Activated CD8-positive, alpha-beta T cell treated with anti-CD3 and anti-CD28 coated beads for 36 hours (primary cell): ENCODE measurements at regions of chr2 and their contacts with region 1.

Region 1: DNA sequence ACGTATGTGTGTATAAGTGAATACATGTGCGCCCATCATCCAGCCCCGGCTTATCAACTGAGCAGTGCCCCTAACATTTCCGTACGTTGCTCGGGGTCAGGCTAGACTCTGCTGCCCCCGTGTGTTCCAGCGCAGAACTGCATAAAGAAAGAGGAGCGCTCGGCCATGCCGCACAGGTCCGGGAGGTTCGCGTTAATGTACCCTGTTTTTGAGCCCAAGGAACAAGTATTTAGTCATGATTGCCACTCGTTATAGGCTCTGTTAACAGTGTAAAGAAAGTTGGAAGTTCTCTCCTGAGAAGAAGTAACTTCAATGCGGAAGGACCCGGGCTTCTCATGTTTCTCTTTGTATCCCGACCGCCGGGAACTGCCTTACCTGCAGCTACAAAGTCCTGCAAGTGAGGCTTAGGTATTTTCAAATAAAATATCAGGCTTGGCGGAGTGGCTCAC is 55.7 kb downstream of the CD8B2 start:
- DNase-seq: peak; percentile 88
- ATAC-seq: peak; percentile 100
- H3K4me3 Mint-ChIP-seq: peak overlapping the region; percentile 44
- H3K27ac Mint-ChIP-seq: no peak overlapping the region
- H3K4me1 Mint-ChIP-seq: no peaks in the 10 kb centered on the region
- H3K27me3 Mint-ChIP-seq: peaks cover 18% of the 10 kb centered on the region
- CTCF ChIP-seq: peak; percentile 96

Region 2: DNA sequence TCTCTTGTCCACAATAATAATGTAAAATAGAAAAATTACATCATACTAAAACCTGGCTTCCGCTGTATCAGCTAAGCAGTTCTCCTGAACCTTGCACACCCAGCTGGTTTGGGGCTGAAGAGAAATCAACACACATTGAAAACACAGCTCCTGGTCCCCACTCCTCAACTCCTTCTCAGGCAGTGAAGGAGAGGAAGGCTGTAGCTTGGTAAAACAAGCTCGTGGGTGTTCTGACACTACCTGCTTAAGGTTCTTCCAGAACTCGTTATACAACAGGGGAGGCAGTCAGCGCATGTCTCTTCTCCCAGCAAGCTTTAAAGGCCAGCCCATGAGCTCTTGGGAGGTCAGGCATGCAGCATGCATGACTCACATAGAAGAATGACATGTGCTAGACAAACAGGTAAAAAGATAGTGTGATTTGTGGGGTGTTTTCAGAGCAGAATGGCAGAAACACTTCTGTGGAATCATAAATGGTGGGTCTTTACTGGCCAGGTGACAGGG is 417.9 kb before region 1 on chr2:
- CTCF ChIA-PET with region 1: no interaction called
- POLR2A ChIA-PET with region 1: no interaction called
- intact Hi-C with region 1: no loop called
- DNase-seq: no peak
- ATAC-seq: no peak
- H3K4me3 Mint-ChIP-seq: no peak overlapping the region
- H3K27ac Mint-ChIP-seq: peak overlapping the region; percentile 49
- H3K4me1 Mint-ChIP-seq: peaks cover 26% of the 10 kb centered on the region
- H3K27me3 Mint-ChIP-seq: no peaks in the 10 kb centered on the region
- CTCF ChIP-seq: no peak

Region 3: GRCh38 chr2:106531745-106532144 is 11.1 kb before region 1 on chr2:
- CTCF ChIA-PET with region 1: interaction called, 14 read pairs
- POLR2A ChIA-PET with region 1: interaction called, 4 read pairs
- intact Hi-C with region 1: no loop called
- DNase-seq: no peak
- ATAC-seq: no peak
- H3K4me3 Mint-ChIP-seq: no peak overlapping the region
- H3K27ac Mint-ChIP-seq: no peak overlapping the region
- H3K4me1 Mint-ChIP-seq: peaks cover 6% of the 10 kb centered on the region
- H3K27me3 Mint-ChIP-seq: peaks cover 7% of the 10 kb centered on the region
- CTCF ChIP-seq: no peak

Region 4: GRCh38 chr2:106572541-106573450 is 30.0 kb after region 1 on chr2:
- CTCF ChIA-PET with region 1: interaction called, 21 read pairs
- POLR2A ChIA-PET with region 1: no interaction called
- intact Hi-C with region 1: no loop called
- DNase-seq: peak; percentile 53
- ATAC-seq: peak; percentile 60
- H3K4me3 Mint-ChIP-seq: no peak overlapping the region
- H3K27ac Mint-ChIP-seq: no peak overlapping the region
- H3K4me1 Mint-ChIP-seq: no peaks in the 10 kb centered on the region
- H3K27me3 Mint-ChIP-seq: peaks cover 5% of the 10 kb centered on the region
- CTCF ChIP-seq: peak; percentile 71

Region 5: GRCh38 chr2:106582148-106583143 is 39.6 kb after region 1 on chr2:
- CTCF ChIA-PET with region 1: interaction called, 13 read pairs
- POLR2A ChIA-PET with region 1: no interaction called
- intact Hi-C with region 1: no loop called
- DNase-seq: peak; percentile 71
- ATAC-seq: peak; percentile 94
- H3K4me3 Mint-ChIP-seq: peak overlapping the region; percentile 79
- H3K27ac Mint-ChIP-seq: no peak overlapping the region
- H3K4me1 Mint-ChIP-seq: peaks cover 9% of the 10 kb centered on the region
- H3K27me3 Mint-ChIP-seq: peaks cover 48% of the 10 kb centered on the region
- CTCF ChIP-seq: peak; percentile 92

Region 6: GRCh38 chr2:106839849-106840581 is 297.2 kb after region 1 on chr2:
- CTCF ChIA-PET with region 1: no interaction called
- POLR2A ChIA-PET with region 1: no interaction called
- intact Hi-C with region 1: no loop called
- DNase-seq: no peak
- ATAC-seq: no peak
- H3K4me3 Mint-ChIP-seq: no peak overlapping the region
- H3K27ac Mint-ChIP-seq: no peak overlapping the region
- H3K4me1 Mint-ChIP-seq: no peaks in the 10 kb centered on the region
- H3K27me3 Mint-ChIP-seq: no peaks in the 10 kb centered on the region
- CTCF ChIP-seq: no peak